Transverse colon (tissue), 4 donors: ENCODE measurements at regions of chr2 and their contacts with region 1.

Region 1: GRCh38 chr2:210224941-210225672 is at the start of gene ACADL:
- DNase-seq: peak; percentile 49
- H3K4me3 ChIP-seq: peak within 1 kb of the TSS; percentile 25 to 56 (median 32)
- H3K27ac ChIP-seq: no peak within 1 kb of the TSS
- H3K4me1 ChIP-seq: peaks cover 0 to 11% (median 10%) of the 10 kb centered on the region in 4 donors
- H3K27me3 ChIP-seq: peaks cover 75% of the 10 kb centered on the region
- CTCF ChIP-seq: no peak
- EP300 ChIP-seq: no peak
- POLR2A ChIP-seq: no peak
- total RNA-seq, gene ACADL: 0.41 to 1.5 (median 1.3) TPM in 3 of 4 donors, not detected in the other

Region 2: GRCh38 chr2:209322041-209322440 is 903.1 kb before region 1 on chr2:
- in situ Hi-C with region 1: loop called in 3 of 4 experiments (anchors 25 kb)
- intact Hi-C with region 1: no loop called
- DNase-seq: no peak
- H3K4me3 ChIP-seq: no peak overlapping the region
- H3K27ac ChIP-seq: no peak overlapping the region
- H3K4me1 ChIP-seq: no peaks in the 10 kb centered on the region
- H3K27me3 ChIP-seq: no peaks in the 10 kb centered on the region
- CTCF ChIP-seq: no peak
- EP300 ChIP-seq: no peak
- POLR2A ChIP-seq: no peak